PC-9 (cell line): ENCODE measurements at regions of chr11 and their contacts with region 1.

Region 1: DNA sequence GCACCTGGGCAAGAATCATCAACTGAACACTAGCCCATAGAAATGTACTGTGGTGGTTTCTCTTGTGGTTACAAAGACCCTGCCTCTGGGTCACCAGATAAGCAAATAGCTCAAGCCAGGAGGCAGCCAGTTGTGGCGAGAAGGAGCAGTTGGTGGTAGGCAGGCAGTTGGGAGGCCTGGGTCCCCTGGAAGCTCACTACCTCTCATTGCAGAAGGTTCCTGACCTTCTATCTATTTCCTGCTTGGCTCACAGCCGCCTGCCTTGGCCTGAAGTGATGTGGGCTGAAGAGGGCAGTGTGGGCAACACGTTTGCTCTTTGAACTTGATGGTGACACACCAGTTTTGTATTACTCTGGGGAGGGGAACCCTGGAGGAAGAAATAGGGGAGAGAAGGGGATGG is 34.7 kb downstream of the NECTIN1 start:
- DNase-seq: peak; percentile 27 to 70
- H3K4me3 ChIP-seq: no peak overlapping the region
- H3K27ac ChIP-seq: peak overlapping the region; percentile 38; the same call in 1 of the 2 replicates
- H3K4me1 ChIP-seq: peaks cover 66% of the 10 kb centered on the region
- H3K27me3 ChIP-seq: no peaks in the 10 kb centered on the region
- CTCF ChIP-seq: peak; percentile 43; the same call in 1 of the 2 replicates

Region 2: DNA sequence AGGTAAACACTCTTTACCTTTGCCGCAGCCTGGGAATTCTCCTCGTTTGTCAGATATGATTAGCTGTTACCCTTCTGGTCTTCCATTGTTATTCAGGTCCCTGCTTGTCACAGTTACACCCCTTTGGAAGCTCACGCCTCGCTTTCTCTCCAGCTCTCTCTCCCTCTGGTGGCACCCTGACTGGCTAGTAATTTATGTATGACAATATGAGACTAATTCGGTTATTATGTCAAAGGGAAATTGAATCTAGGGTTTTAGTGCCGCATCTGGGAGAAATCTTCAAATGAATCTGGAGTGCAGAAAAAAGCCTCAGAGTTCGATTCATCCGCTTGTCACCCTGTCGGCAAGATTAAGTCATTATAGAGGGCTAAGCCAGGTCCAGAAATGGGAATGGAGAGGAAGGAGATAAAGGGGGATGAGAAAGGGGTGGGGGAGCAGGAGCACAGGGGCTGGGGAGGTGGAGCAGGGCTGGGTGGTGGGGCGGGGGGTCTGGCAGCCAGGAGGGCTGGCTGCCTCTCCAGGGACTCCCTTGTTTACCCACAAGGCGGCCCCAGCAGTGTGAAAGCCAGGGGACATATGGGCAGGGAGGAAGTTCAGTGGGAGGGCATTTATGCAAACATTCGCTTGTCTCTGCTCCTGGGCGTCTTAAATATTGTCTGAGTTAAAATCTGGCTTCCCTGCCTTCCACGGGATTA is 213.7 kb after region 1 on chr11:
- CTCF ChIA-PET with region 1: no interaction called
- POLR2A ChIA-PET with region 1: no interaction called
- intact Hi-C with region 1: loop called (anchors 2 kb)
- DNase-seq: peak in 1 of 2 experiments; percentile 56
- H3K4me3 ChIP-seq: no peak overlapping the region
- H3K27ac ChIP-seq: peak overlapping the region; percentile 62
- H3K4me1 ChIP-seq: peaks cover 56% of the 10 kb centered on the region
- H3K27me3 ChIP-seq: no peaks in the 10 kb centered on the region
- CTCF ChIP-seq: no peak